PC-3 (cell line): ENCODE measurements at regions of chr6 and their contacts with region 1.

Region 1: GRCh38 chr6:47631269-47631772 is 67.1 kb upstream of the ADGRF4 start:
- DNase-seq: peak; percentile 92
- ATAC-seq: peak; percentile 61
- H3K4me3 ChIP-seq: no peak overlapping the region
- H3K27ac ChIP-seq: no peak overlapping the region
- H3K4me1 ChIP-seq: peaks cover 4% of the 10 kb centered on the region
- H3K27me3 ChIP-seq: no peaks in the 10 kb centered on the region
- CTCF ChIP-seq: peak; percentile 74

Region 2: GRCh38 chr6:46821458-46821900 is 809.8 kb before region 1 on chr6:
- CTCF ChIA-PET with region 1: no interaction called
- POLR2A ChIA-PET with region 1: no interaction called
- intact Hi-C with region 1: no loop called
- DNase-seq: no peak
- ATAC-seq: no peak
- H3K4me3 ChIP-seq: no peak overlapping the region
- H3K27ac ChIP-seq: no peak overlapping the region
- H3K4me1 ChIP-seq: 0 out of 2 replicates have a peak, but pooled peaks cover 4% of the 10 kb centered on the region
- H3K27me3 ChIP-seq: no peaks in the 10 kb centered on the region
- CTCF ChIP-seq: no peak

Region 3: DNA sequence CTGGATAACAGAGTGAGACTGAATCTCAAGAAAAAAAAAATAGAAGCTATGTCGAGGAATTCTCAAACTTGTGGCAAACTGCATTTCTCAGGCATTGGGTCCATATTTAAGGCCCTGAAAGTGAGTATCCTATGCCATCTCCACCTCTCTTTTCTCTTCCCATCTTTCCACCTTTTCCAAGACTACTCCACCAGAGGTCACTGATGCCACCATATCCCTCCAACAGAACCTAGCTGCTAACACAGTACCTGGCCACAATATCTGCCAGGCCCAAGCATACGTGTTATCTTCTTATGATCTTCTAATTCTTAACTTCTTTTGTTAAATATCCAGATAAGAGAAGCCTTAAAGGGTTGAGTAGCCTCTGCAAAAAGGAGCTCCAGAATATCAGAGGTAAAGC is 58.9 kb after region 1 on chr6:
- CTCF ChIA-PET with region 1: no interaction called
- POLR2A ChIA-PET with region 1: no interaction called
- intact Hi-C with region 1: loop called (anchors 1 kb)
- DNase-seq: peak; percentile 48
- ATAC-seq: peak; percentile 80
- H3K4me3 ChIP-seq: no peak overlapping the region
- H3K27ac ChIP-seq: no peak overlapping the region
- H3K4me1 ChIP-seq: no peaks in the 10 kb centered on the region
- H3K27me3 ChIP-seq: no peaks in the 10 kb centered on the region
- CTCF ChIP-seq: peak; percentile 50

Region 4: GRCh38 chr6:48747069-48747870 is 1115.9 kb after region 1 on chr6:
- CTCF ChIA-PET with region 1: no interaction called
- POLR2A ChIA-PET with region 1: no interaction called
- intact Hi-C with region 1: no loop called
- DNase-seq: peak; percentile 85
- ATAC-seq: peak; percentile 95
- H3K4me3 ChIP-seq: no peak overlapping the region
- H3K27ac ChIP-seq: peak overlapping the region; percentile 81
- H3K4me1 ChIP-seq: peaks cover 35% of the 10 kb centered on the region
- H3K27me3 ChIP-seq: no peaks in the 10 kb centered on the region
- CTCF ChIP-seq: no peak